WTC11 (cell line): ENCODE measurements at regions of chr1 and their contacts with region 1.

Region 1: GRCh38 chr1:184664042-184664655 is 90.5 kb downstream of the EDEM3 start:
- DNase-seq: peak; percentile 92
- ATAC-seq: peak; percentile 96
- H3K4me3 Mint-ChIP-seq: peak overlapping the region; percentile 67
- H3K27ac Mint-ChIP-seq: no peak overlapping the region
- H3K4me1 Mint-ChIP-seq: peaks cover 34% of the 10 kb centered on the region
- H3K27me3 Mint-ChIP-seq: peaks cover 8% of the 10 kb centered on the region
- CTCF ChIP-seq: peak; percentile 89

Region 2: GRCh38 chr1:184242507-184242943 is 421.6 kb before region 1 on chr1:
- CTCF ChIA-PET with region 1: interaction called, 64 read pairs
- POLR2A ChIA-PET with region 1: interaction called, 3 read pairs
- DNase-seq: no peak
- ATAC-seq: peak; percentile 71
- H3K4me3 Mint-ChIP-seq: no peak overlapping the region
- H3K27ac Mint-ChIP-seq: no peak overlapping the region
- H3K4me1 Mint-ChIP-seq: no peaks in the 10 kb centered on the region
- H3K27me3 Mint-ChIP-seq: no peaks in the 10 kb centered on the region; the same call in 1 of the 2 replicates
- CTCF ChIP-seq: no peak

Region 3: DNA sequence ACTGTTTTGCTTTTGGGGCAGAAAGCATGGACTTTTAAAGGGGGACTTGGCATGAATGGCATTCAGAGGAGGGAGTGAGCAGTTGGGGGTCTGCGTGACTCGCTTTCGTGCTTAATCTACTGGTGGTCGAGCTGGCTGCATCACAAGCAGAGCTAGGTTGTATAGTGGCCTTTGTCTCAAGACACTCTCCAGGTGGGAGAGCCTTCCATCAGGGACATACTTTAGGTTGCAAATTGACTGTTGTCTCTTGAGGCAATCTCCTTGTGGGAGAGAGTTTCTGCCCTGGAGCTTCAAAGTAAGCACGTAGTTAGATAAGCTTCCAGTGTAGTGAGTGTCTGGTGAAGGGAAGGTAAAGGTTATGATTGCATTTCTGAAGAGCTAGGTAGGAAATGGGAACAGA is 183.4 kb before region 1 on chr1:
- CTCF ChIA-PET with region 1: interaction called, 15 read pairs
- POLR2A ChIA-PET with region 1: no interaction called
- DNase-seq: peak; percentile 46
- ATAC-seq: peak; percentile 86
- H3K4me3 Mint-ChIP-seq: peak overlapping the region; percentile 32
- H3K27ac Mint-ChIP-seq: peak overlapping the region; percentile 99
- H3K4me1 Mint-ChIP-seq: peaks cover 57% of the 10 kb centered on the region
- H3K27me3 Mint-ChIP-seq: no peaks in the 10 kb centered on the region
- CTCF ChIP-seq: no peak

Region 4: DNA sequence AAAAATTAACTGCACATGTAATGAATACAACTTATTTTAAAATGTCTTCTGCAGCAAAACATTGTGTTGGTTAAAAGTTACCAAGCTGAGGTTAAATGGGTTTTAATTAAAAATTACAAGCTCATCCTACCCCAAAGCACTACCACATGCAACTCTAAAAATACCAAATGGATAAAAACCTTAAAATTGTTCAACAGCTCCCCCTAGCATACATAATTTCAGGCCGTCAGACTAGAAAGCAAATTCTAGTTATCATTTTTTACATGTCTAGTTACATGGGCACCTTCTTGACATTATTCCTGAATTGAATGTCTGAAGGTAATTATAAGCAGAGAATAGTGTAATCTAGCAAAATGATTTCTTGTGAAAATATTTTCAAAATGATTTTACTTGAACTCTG is 100.8 kb before region 1 on chr1:
- CTCF ChIA-PET with region 1: interaction called, 15 read pairs
- POLR2A ChIA-PET with region 1: no interaction called
- DNase-seq: no peak
- ATAC-seq: no peak
- H3K4me3 Mint-ChIP-seq: no peak overlapping the region
- H3K27ac Mint-ChIP-seq: no peak overlapping the region
- H3K4me1 Mint-ChIP-seq: 0 out of 2 replicates have a peak, but pooled peaks cover 3% of the 10 kb centered on the region
- H3K27me3 Mint-ChIP-seq: no peaks in the 10 kb centered on the region
- CTCF ChIP-seq: no peak

Region 5: DNA sequence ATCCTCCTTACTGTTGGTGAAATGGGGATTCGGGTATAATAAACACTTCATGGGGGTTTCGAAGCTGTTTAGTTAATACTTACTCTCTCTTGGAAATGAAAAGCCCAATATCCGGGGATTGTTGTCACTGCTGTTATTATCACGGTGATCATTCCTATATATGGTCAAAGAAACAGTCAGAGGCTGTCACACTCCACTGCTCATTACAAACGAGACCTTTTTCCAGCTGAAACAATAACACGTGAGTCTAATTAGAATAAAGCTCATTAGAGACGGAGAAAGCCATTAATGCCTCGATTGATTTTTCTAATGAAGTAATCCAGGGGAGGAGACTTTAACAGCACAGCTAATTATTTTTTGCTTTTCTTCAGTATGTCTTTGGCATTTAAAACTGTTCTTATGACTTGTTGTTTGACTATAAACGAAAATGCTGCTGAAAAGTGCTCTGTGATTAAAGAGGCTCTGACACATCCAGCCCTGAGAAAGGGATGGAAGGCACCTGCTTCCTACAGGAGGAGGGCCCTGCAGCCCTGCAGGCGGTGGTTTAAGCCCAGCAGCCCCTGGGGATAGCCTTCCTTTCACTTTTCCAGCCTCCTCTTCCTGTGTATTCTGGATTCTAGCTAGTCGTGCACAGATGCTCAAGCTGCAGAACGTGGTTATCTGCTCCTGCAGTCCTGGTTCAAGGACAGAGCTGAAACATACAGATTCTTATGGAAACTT is 53.1 kb before region 1 on chr1:
- CTCF ChIA-PET with region 1: interaction called, 12 read pairs
- POLR2A ChIA-PET with region 1: no interaction called
- DNase-seq: no peak
- ATAC-seq: peak; percentile 46
- H3K4me3 Mint-ChIP-seq: no peak overlapping the region
- H3K27ac Mint-ChIP-seq: no peak overlapping the region
- H3K4me1 Mint-ChIP-seq: peaks cover 30% of the 10 kb centered on the region
- H3K27me3 Mint-ChIP-seq: no peaks in the 10 kb centered on the region
- CTCF ChIP-seq: no peak

Region 6: DNA sequence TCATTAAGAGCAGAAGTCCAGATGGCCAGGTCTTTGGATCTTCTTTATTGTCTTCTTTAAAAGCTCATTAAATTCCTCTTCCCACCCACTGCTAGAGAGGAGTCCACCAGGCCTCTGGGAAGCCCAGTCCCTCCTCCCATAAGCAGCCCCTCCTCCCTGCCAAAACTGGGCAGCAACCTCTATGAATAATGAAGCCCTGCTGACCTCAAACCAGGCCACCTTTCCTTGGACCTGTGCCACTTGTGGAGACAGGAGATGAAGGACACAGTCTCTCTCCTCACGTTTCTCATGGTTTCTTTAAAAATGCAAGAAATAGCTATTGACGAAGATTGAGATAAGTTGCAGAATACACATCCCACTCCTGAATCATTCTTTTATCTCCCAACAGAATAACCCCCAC is 22.3 kb before region 1 on chr1:
- CTCF ChIA-PET with region 1: interaction called, 18 read pairs
- POLR2A ChIA-PET with region 1: no interaction called
- DNase-seq: no peak
- ATAC-seq: no peak
- H3K4me3 Mint-ChIP-seq: no peak overlapping the region
- H3K27ac Mint-ChIP-seq: no peak overlapping the region
- H3K4me1 Mint-ChIP-seq: no peaks in the 10 kb centered on the region
- H3K27me3 Mint-ChIP-seq: no peaks in the 10 kb centered on the region; the same call in 1 of the 2 replicates
- CTCF ChIP-seq: no peak

Region 7: DNA sequence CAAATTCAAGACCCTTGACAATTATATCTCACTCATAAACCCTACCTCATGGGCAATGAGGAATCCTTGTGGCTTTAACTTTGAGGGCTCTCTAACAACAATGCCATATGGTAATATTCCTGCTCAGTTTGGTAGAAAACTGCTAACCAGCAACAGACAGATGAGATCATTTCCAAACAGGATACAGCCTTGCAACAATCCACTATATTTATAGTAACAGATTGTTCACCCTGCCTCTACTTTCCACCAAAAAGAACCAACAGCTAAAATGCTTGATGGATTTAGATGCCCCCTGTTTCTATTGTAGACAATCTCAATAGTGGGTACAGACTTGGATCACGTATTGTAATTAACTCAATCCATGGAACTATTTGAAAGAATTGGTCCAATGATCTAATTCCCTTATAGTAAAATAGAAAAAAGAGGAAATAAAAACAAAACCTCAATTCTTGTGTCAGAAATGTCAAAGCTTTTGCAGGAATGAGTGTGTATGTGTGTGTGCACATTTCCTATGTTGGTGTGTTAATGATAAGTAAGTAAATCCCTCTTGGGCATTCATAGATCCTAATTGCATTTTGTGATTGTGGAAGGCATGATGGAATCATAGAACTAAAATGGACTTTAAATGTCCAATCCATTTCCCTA is 190.5 kb after region 1 on chr1:
- CTCF ChIA-PET with region 1: no interaction called
- POLR2A ChIA-PET with region 1: no interaction called
- DNase-seq: no peak
- ATAC-seq: no peak
- H3K4me3 Mint-ChIP-seq: no peak overlapping the region
- H3K27ac Mint-ChIP-seq: no peak overlapping the region
- H3K4me1 Mint-ChIP-seq: peaks cover 4% of the 10 kb centered on the region
- H3K27me3 Mint-ChIP-seq: no peaks in the 10 kb centered on the region; the same call in 1 of the 2 replicates
- CTCF ChIP-seq: no peak

Region 8: GRCh38 chr1:184915463-184916090 is 251.4 kb after region 1 on chr1:
- CTCF ChIA-PET with region 1: no interaction called
- POLR2A ChIA-PET with region 1: no interaction called
- DNase-seq: no peak
- ATAC-seq: no peak
- H3K4me3 Mint-ChIP-seq: no peak overlapping the region
- H3K27ac Mint-ChIP-seq: no peak overlapping the region
- H3K4me1 Mint-ChIP-seq: peaks cover 3% of the 10 kb centered on the region; the same call in 1 of the 2 replicates
- H3K27me3 Mint-ChIP-seq: no peaks in the 10 kb centered on the region
- CTCF ChIP-seq: no peak